ENCODE measurements at regions of chr6 and their contacts with region 1.

Region 1: DNA sequence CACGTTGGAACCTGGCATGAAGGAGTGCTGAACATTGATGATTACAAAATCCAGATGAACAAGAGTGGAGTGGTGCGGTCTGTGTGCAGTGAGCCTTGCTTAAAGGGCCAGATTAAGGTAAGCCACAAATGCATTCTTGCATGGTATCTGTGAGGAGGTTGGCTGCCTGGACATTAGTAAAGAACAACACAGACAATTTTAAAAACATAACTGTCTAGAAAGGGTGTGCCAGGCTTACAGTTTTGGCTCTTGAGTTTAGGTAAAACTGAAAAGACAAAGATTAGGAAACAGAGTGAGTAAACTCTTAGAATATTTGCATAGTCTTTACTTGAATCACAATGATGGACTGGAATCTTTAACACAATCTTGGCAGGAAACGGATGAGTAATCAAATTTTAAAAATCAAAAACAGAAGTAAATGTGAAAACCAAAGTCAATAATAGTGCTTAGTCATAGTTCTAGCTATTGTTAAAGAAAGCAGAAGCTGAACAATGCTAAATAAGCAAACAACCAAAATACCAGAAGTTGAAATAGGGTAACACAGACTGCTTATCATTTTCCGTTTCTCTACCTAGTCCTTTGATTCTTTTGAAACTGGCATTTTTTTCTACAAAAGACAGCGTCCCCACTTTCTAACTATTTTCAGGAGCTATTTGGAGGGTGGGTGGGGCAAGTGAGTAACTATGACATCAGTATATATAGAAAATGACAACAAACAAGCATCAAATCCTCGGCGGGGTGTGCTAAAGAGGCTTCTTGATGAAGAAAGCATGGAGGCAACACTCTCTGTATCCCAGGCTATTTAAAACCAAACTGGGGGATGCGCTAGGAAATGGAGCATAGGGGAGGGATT is 185.8 kb upstream of the RAB32 start:
- DNase-seq: no peak
- H3K4me3 Mint-ChIP-seq: no peak overlapping the region
- H3K27ac Mint-ChIP-seq: peak overlapping the region; percentile 66
- H3K4me1 Mint-ChIP-seq: peaks cover 49% of the 10 kb centered on the region
- H3K27me3 Mint-ChIP-seq: no peaks in the 10 kb centered on the region
- CTCF ChIP-seq: no peak

Region 2: GRCh38 chr6:146546441-146546840 is 188.6 kb after region 1 on chr6:
- CTCF ChIA-PET with region 1: no interaction called
- intact Hi-C with region 1: loop called (anchors 5 kb)
- DNase-seq: peak; percentile 28
- H3K4me3 Mint-ChIP-seq: peak overlapping the region; percentile 90
- H3K27ac Mint-ChIP-seq: peak overlapping the region; percentile 91
- H3K4me1 Mint-ChIP-seq: peaks cover 7% of the 10 kb centered on the region
- H3K27me3 Mint-ChIP-seq: no peaks in the 10 kb centered on the region
- CTCF ChIP-seq: no peak

Measured in Calu3 (cell line).